Common myeloid progenitor, CD34-positive (primary cell): ENCODE measurements at regions of chr22 and their contacts with region 1.

Region 1: GRCh38 chr22:39148747-39149561 is 3.5 kb downstream of the CBX7 start:
- DNase-seq: peak in 2 of 3 donors; percentile 73 to 78
- H3K4me3 ChIP-seq: no peak overlapping the region
- H3K27ac ChIP-seq: no peak overlapping the region
- H3K4me1 ChIP-seq: peaks cover 0 to 44% (median 34%) of the 10 kb centered on the region in 4 experiments
- H3K27me3 ChIP-seq: peaks cover 3 to 11% (median 9%) of the 10 kb centered on the region in 5 experiments

Region 2: GRCh38 chr22:39135090-39135896 is 13.7 kb before region 1 on chr22:
- CTCF ChIA-PET with region 1: interaction called, 11 read pairs
- POLR2A ChIA-PET with region 1: no interaction called
- DNase-seq: peak in 2 of 3 donors; percentile 61 to 68
- H3K4me3 ChIP-seq: no peak overlapping the region
- H3K27ac ChIP-seq: no peak overlapping the region
- H3K4me1 ChIP-seq: peaks cover 0 to 12% (median 0%) of the 10 kb centered on the region in 4 experiments
- H3K27me3 ChIP-seq: peaks cover 0 to 15% (median 0%) of the 10 kb centered on the region in 5 experiments

Region 3: GRCh38 chr22:39253435-39254070 is 104.6 kb after region 1 on chr22:
- CTCF ChIA-PET with region 1: no interaction called
- POLR2A ChIA-PET with region 1: no interaction called
- DNase-seq: peak; percentile 40 to 57 (median 55)
- H3K4me3 ChIP-seq: peak overlapping the region in 1 of 7 experiments; percentile 32
- H3K27ac ChIP-seq: no peak overlapping the region
- H3K4me1 ChIP-seq: peaks cover 0 to 18% (median 14%) of the 10 kb centered on the region in 4 experiments
- H3K27me3 ChIP-seq: peaks cover 0 to 94% (median 43%) of the 10 kb centered on the region in 5 experiments